Activated CD4-positive, alpha-beta T cell treated with anti-CD3 and anti-CD28 coated beads, Interleukin-2, amount 10 ng/mL, durations not matched to agents 24 days and 14 days (primary cell): ENCODE measurements at regions of chr10 and their contacts with region 1.

Region 1: DNA sequence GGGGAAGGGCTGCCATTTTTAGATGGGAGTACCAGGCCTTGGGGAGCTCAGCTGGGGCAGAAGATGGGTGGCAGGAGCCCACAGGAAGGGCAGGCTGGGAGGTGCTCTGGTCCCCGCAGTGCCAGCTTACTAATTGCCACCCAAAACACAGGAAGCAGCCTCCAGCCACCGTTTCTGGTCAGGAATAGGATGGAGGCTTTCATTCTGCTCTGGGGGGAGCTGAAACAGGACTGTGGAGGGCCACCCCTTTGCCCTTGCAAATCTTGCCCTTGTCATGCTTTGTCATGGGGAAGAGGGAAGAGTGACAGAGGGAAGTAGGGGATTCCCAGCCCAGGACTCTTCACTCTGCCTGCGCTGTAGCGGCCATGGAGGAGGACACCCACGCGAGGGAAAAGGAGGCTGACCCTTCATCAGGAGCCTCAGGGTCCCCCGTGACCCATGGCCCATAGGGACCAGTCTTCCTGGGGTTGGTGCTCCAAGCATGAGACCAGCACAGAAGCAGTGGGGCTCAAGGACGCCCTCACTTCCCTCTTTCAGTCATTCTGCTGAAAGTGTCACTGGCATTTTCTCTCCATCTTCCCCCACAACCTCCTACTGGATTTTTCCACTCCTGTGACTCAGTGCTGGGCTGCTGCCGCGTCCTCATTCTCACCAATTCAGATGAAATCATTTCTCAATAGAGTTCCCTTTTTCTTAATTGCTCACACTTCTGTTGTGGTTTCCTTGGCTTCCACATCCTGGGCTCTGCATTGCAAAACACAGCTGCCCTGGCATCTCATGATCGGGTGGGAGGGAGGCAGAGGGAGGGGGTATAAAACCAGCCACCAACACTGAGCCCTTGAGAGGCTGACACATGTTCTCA is 61.9 kb downstream of the MKI67 start:
- DNase-seq: peak; percentile 85
- H3K4me3 Mint-ChIP-seq: peak overlapping the region; percentile 77
- H3K27ac Mint-ChIP-seq: peak overlapping the region; percentile 96
- H3K4me1 Mint-ChIP-seq: peaks cover 57% of the 10 kb centered on the region
- H3K27me3 Mint-ChIP-seq: no peaks in the 10 kb centered on the region

Region 2: DNA sequence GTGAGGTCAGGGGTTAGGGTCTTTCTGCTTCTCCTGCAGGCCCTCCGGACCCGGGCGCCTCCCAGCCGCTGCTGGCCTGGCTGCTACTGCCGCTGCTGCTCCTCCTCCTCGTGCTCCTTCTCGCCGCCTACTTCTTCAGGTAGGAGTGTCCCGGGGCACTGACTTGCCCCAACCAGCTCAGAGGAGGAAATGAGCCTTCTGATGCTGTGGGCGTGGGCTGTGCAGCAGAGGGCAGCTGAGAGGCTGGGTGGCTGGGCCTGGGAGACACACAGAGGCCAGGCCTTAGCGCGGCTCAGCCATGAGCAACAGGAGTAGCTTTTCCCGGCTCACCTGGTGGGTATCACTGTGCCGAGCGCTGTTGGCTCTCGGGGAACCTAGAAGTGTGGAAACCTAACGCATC is 17.0 kb before region 1 on chr10:
- intact Hi-C with region 1: loop called (anchors 1 kb)
- DNase-seq: peak; percentile 96
- H3K4me3 Mint-ChIP-seq: peak overlapping the region; percentile 86
- H3K27ac Mint-ChIP-seq: peak overlapping the region; percentile 90
- H3K4me1 Mint-ChIP-seq: peaks cover 48% of the 10 kb centered on the region
- H3K27me3 Mint-ChIP-seq: no peaks in the 10 kb centered on the region